ENCODE measurements at regions of chr20 and their contacts with region 1.

Region 1: GRCh38 chr20:45095753-45096371 is 5.1 kb downstream of the KCNS1 start:
- DNase-seq: peak; percentile 78
- ATAC-seq: peak; percentile 56
- H3K4me3 ChIP-seq: no peak overlapping the region
- H3K4me3 Mint-ChIP-seq: peak overlapping the region; percentile 19
- H3K27ac ChIP-seq: no peak overlapping the region
- H3K27ac Mint-ChIP-seq: no peak overlapping the region
- H3K4me1 ChIP-seq: peaks cover 21% of the 10 kb centered on the region in 2 donors
- H3K4me1 Mint-ChIP-seq: peaks cover 15% of the 10 kb centered on the region
- H3K27me3 ChIP-seq: peaks cover 0 to 44% (median 26%) of the 10 kb centered on the region in 4 experiments
- H3K27me3 Mint-ChIP-seq: peaks cover 31% of the 10 kb centered on the region
- CTCF ChIP-seq: peak; percentile 85

Region 2: GRCh38 chr20:44747166-44748004 is 348.5 kb before region 1 on chr20:
- CTCF ChIA-PET with region 1: interaction called, 12 read pairs
- POLR2A ChIA-PET with region 1: no interaction called
- intact Hi-C with region 1: loop called (anchors 5 kb)
- DNase-seq: peak; percentile 66
- ATAC-seq: peak; percentile 44
- H3K4me3 ChIP-seq: no peak overlapping the region
- H3K4me3 Mint-ChIP-seq: peak overlapping the region; percentile 60
- H3K27ac ChIP-seq: no peak overlapping the region
- H3K27ac Mint-ChIP-seq: no peak overlapping the region
- H3K4me1 ChIP-seq: peaks cover 7 to 15% of the 10 kb centered on the region in 2 donors
- H3K4me1 Mint-ChIP-seq: peaks cover 16% of the 10 kb centered on the region
- H3K27me3 ChIP-seq: peaks cover 0 to 42% (median 20%) of the 10 kb centered on the region in 4 experiments
- H3K27me3 Mint-ChIP-seq: peaks cover 34% of the 10 kb centered on the region
- CTCF ChIP-seq: peak; percentile 66

Region 3: DNA sequence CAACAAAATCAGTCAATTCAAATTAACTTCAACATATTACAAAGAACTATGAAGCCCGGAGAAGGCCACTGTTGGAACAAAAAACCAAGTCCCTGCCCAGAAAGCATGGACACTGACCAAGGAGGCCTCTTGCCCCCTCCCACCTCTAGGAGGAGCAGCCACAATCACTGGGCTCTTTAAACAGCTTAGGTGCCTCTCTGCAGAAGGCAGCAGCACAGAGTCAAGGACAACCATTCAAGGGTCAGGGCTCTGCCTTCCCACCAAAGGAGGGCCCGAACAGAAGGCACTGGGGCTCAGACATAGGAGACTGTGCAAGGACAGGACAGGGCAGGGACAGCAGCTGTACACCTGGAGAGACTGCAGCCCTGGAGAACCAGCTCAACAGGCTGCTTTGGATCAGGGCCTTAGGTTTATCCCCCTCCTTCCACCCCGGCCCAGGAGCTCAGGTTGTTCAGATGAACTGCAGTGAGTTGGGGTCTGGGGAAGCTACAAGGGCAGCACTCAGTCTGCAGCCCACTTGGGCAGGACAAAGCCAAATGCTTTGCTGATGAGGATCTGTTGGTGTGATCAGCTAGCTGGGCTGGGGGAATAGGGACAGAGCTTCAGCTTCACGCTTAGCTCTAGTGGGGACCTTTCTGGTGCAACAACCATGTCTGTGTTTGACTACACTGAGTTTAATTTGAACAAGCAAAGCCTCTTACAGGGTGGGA is 153.4 kb before region 1 on chr20:
- CTCF ChIA-PET with region 1: no interaction called
- POLR2A ChIA-PET with region 1: no interaction called
- intact Hi-C with region 1: no loop called
- DNase-seq: no peak
- ATAC-seq: no peak
- H3K4me3 ChIP-seq: no peak overlapping the region
- H3K4me3 Mint-ChIP-seq: no peak overlapping the region
- H3K27ac ChIP-seq: no peak overlapping the region
- H3K27ac Mint-ChIP-seq: no peak overlapping the region
- H3K4me1 ChIP-seq: no peaks in the 10 kb centered on the region
- H3K4me1 Mint-ChIP-seq: no peaks in the 10 kb centered on the region
- H3K27me3 ChIP-seq: no peaks in the 10 kb centered on the region
- H3K27me3 Mint-ChIP-seq: no peaks in the 10 kb centered on the region
- CTCF ChIP-seq: no peak

Region 4: DNA sequence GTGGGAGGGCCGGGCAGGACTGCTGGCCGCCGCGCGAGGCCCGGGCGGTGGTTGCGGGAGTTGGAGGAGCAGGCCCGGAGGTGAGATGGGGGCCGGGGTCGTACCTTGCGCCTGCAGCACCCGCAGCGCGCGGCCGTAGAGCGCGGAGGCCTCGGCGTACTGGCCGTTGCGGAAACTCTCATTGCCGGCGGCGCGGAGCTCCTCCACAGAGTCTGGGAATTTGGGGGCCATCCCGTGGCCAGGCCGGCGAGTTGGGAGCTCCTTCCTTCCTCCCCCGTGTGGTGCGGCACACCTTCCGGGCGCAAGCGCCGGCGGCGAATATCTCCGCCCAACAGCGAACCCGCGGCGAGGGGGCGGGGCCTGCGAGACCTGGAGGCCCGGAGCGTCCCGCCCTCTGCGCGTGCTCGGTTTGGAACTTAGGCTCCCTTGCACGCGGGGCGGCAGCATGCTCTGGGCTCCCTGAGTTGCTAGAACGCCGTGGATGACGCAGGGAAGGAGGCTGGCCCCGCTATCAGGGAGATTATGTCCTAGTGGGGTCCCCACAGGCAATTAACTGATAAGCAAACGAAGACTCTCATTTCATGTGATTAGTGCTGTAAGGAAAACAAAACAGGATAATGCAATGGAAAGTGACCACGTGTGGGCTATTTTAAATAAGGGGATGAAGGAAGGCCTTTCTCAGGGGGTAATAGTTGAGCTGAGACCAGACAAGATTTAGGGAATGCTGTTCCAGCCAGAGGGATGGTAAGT is 135.6 kb before region 1 on chr20 and contains the start of gene TOMM34:
- CTCF ChIA-PET with region 1: interaction called, 11 read pairs
- POLR2A ChIA-PET with region 1: no interaction called
- intact Hi-C with region 1: no loop called
- DNase-seq: peak; percentile 93
- ATAC-seq: peak; percentile 96
- H3K4me3 ChIP-seq: peak within 1 kb of the TSS; percentile 36 to 93 (median 82)
- H3K4me3 Mint-ChIP-seq: peak within 1 kb of the TSS; percentile 92
- H3K27ac ChIP-seq: peak within 1 kb of the TSS in 1 of 2 donors; percentile 70
- H3K27ac Mint-ChIP-seq: peak within 1 kb of the TSS; percentile 93
- H3K4me1 ChIP-seq: peaks cover 42 to 54% of the 10 kb centered on the region in 2 donors
- H3K4me1 Mint-ChIP-seq: peaks cover 57% of the 10 kb centered on the region
- H3K27me3 ChIP-seq: no peaks in the 10 kb centered on the region
- H3K27me3 Mint-ChIP-seq: no peaks in the 10 kb centered on the region
- CTCF ChIP-seq: no peak
- total RNA-seq, gene TOMM34: 21.8 and 21.9 TPM in 2 replicates

Region 5: GRCh38 chr20:45036044-45036755 is 59.7 kb before region 1 on chr20:
- CTCF ChIA-PET with region 1: interaction called, 134 read pairs
- POLR2A ChIA-PET with region 1: no interaction called
- intact Hi-C with region 1: no loop called
- DNase-seq: no peak
- ATAC-seq: no peak
- H3K4me3 ChIP-seq: no peak overlapping the region
- H3K4me3 Mint-ChIP-seq: no peak overlapping the region
- H3K27ac ChIP-seq: peak overlapping the region in 1 of 2 donors; percentile 45
- H3K27ac Mint-ChIP-seq: no peak overlapping the region
- H3K4me1 ChIP-seq: peaks cover 9 to 17% of the 10 kb centered on the region in 2 donors
- H3K4me1 Mint-ChIP-seq: peaks cover 54% of the 10 kb centered on the region
- H3K27me3 ChIP-seq: no peaks in the 10 kb centered on the region
- H3K27me3 Mint-ChIP-seq: no peaks in the 10 kb centered on the region
- CTCF ChIP-seq: no peak

Region 6: DNA sequence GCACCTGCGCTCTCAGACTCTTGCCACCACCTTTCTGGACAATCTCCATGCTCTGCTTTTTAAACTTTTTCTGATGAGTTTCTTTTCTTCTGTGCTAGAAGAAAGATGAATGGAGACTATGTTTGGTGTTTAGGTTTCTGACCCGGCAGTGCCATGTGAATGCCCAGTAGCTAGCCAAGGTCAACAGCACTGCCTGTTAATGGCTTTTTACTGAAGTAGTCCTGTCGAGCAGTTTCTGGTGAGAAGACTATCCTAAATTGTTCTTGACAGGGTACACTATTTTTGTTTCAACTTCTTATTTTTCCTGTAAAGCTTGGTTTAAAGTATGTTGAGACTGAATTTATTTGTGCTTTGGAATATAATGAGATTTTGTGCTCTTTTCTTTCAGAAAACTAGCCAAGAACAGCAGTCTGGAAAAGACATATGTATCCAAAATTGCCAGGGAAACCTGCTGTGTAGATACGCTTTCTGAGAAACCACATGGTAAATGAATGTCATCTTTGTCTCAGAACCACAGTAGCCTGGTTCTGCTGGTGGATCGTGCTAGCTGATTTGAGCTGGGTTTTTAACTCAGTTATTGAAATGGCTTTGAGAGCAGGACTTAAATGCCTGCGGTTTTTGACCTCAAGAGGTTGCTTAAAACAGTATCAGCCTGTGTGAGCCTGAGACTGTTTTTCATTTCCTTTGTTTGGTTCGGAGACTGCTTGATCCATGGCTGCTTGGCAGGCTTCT is 43.0 kb before region 1 on chr20:
- CTCF ChIA-PET with region 1: interaction called, 80 read pairs
- POLR2A ChIA-PET with region 1: no interaction called
- intact Hi-C with region 1: no loop called
- DNase-seq: peak; percentile 48
- ATAC-seq: peak; percentile 35
- H3K4me3 ChIP-seq: no peak overlapping the region
- H3K4me3 Mint-ChIP-seq: peak overlapping the region; percentile 30
- H3K27ac ChIP-seq: peak overlapping the region; percentile 82 to 88
- H3K27ac Mint-ChIP-seq: peak overlapping the region; percentile 73
- H3K4me1 ChIP-seq: peaks cover 53 to 58% of the 10 kb centered on the region in 2 donors
- H3K4me1 Mint-ChIP-seq: peaks cover 71% of the 10 kb centered on the region
- H3K27me3 ChIP-seq: no peaks in the 10 kb centered on the region
- H3K27me3 Mint-ChIP-seq: no peaks in the 10 kb centered on the region
- CTCF ChIP-seq: no peak

Region 7: GRCh38 chr20:45111799-45112471 is 16.1 kb after region 1 on chr20:
- CTCF ChIA-PET with region 1: interaction called, 33 read pairs
- POLR2A ChIA-PET with region 1: no interaction called
- intact Hi-C with region 1: no loop called
- DNase-seq: peak; percentile 47
- ATAC-seq: no peak
- H3K4me3 ChIP-seq: no peak overlapping the region
- H3K4me3 Mint-ChIP-seq: no peak overlapping the region
- H3K27ac ChIP-seq: no peak overlapping the region
- H3K27ac Mint-ChIP-seq: no peak overlapping the region
- H3K4me1 ChIP-seq: no peaks in the 10 kb centered on the region
- H3K4me1 Mint-ChIP-seq: no peaks in the 10 kb centered on the region
- H3K27me3 ChIP-seq: peaks cover 0 to 5% (median 0%) of the 10 kb centered on the region in 4 experiments
- H3K27me3 Mint-ChIP-seq: peaks cover 6% of the 10 kb centered on the region
- CTCF ChIP-seq: peak; percentile 53